GM10248 (cell line): ENCODE measurements at regions of chr1 and their contacts with region 1.

Region 1: DNA sequence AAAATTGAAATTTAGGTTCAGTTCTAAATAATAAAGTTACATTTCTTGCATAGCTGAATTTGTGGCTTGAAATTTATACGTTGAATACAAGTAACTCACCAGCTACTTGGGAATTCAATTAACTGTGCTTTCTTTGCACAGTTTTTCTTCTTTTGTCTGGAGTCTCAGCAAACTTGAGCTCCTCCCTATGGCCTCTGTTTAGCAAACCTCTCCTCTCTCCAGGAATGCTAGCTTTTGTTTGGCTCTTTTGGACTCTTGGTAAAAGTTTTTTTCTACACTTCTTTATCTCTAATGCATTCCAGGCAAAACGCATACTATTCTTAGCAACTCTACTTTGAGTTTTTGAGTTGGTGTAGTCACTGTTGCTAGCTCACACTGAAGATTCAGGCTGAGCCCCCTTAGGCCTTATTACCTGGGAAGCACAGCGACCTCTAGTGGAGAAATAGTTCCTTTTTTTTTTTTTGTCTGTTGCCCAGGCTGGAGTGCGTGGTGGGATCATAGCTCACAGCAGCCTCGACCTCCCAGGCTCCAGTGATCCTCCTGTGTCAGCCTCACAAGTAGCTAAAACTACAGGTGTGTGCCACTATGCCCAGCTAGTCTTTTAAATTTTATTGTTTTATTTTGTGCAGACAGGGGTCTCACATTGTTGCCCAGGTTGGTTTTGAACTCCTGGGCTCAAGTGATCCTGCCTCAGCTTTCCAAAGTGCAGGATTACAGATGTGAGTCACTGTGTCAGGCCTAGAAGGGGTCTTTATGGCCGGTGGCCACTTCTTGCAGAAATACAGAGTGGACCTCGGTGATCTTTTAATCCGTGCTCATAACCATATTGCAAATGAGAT is 61.7 kb downstream of the CASQ2 start:
- DNase-seq: peak; percentile 51
- CTCF ChIP-seq: peak; percentile 59

Region 2: GRCh38 chr1:115609021-115609420 is 97.8 kb before region 1 on chr1:
- CTCF ChIA-PET with region 1: interaction called, 95 read pairs
- POLR2A ChIA-PET with region 1: no interaction called
- DNase-seq: no peak
- CTCF ChIP-seq: no peak

Region 3: GRCh38 chr1:115648717-115649691 is 57.8 kb before region 1 on chr1:
- CTCF ChIA-PET with region 1: interaction called, 16 read pairs
- POLR2A ChIA-PET with region 1: no interaction called
- DNase-seq: peak; percentile 74
- CTCF ChIP-seq: no peak

Region 4: DNA sequence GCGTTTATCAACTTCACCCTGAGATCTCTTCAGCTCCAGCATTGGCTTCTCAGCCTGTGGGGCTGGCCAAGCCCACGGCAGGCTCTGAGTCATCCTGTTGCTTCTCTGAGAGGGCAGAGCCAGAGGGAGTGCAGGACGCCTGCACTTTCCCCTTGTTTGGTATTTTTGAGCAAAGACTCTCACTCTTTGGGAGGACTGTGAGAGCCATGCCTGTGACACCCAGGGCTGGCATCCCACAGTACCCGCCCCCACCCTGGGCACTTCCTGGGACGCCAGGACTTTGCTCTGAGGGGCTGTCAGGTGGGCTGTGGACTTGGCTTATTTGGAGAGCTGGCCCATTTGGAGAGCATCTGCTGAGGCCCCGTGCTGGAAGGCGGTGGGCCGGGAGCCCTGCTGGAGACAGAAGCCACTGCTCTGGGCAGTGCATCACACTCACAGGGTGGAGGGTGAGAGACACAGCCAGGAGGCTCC is 27.6 kb before region 1 on chr1:
- CTCF ChIA-PET with region 1: interaction called, 30 read pairs
- POLR2A ChIA-PET with region 1: no interaction called
- DNase-seq: no peak
- CTCF ChIP-seq: no peak

Region 5: GRCh38 chr1:115694805-115695204 is 12.0 kb before region 1 on chr1:
- CTCF ChIA-PET with region 1: interaction called, 28 read pairs
- POLR2A ChIA-PET with region 1: no interaction called
- DNase-seq: no peak
- CTCF ChIP-seq: no peak

Region 6: GRCh38 chr1:115729756-115730155 is 22.9 kb after region 1 on chr1:
- CTCF ChIA-PET with region 1: interaction called, 10 read pairs
- POLR2A ChIA-PET with region 1: no interaction called
- DNase-seq: peak; percentile 73
- CTCF ChIP-seq: no peak

Region 7: DNA sequence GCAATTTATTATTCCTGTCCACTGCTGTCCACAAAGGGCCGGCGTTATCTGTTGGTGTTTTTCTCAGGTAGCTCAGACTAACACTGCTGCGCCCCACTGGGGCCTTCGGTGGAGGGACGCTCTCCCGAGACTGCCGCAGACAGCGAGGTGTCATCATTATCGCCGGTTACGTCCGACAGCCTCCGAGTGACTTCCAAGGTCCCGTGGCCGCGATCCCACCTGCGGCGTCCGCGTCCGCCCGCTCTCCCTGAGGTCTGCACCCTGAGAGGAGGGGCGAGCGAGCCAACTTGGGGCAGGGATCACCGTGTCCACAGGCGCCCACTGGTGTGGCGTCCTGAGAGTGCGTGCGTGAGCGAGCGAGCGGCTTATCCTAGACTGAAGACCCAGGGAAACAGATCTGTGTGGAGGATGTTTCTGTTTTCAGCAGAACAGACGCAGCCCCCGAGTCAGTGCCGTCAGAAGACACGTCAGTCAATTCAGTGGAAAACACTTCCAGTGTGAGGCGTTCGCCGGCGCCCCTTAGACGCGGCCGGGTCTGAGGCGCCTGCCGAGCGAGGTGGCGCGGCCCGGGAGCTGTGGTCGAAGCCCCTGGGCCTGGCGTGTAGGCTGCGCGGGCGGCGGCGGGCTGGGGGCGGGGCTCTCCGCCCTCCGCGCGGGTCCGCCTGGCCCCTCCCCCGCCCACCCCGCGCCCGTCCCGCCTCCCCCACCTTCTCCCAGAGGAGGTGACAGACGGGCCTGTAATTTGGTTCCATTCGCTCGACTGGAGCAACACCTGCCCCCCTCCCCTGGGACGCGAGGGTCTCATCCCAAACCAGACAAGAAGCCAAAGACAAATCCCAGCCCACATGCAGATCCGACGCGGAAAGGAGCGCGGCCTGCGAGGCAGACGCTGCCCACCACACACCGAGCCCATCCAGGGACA is 121.6 kb after region 1 on chr1:
- CTCF ChIA-PET with region 1: no interaction called
- POLR2A ChIA-PET with region 1: no interaction called
- DNase-seq: no peak
- CTCF ChIP-seq: no peak